Sigmoid colon (tissue), 7 donors: ENCODE measurements at regions of chr10 and their contacts with region 1.

Region 1: GRCh38 chr10:70668454-70668970 is 3.8 kb upstream of the ADAMTS14 start:
- DNase-seq: no peak
- H3K4me3 ChIP-seq: no peak overlapping the region
- H3K27ac ChIP-seq: no peak overlapping the region
- H3K4me1 ChIP-seq: peaks cover 0 to 28% (median 21%) of the 10 kb centered on the region in 4 donors
- H3K27me3 ChIP-seq: peaks cover 0 to 18% (median 0%) of the 10 kb centered on the region in 3 donors
- CTCF ChIP-seq: no peak
- EP300 ChIP-seq: no peak
- POLR2A ChIP-seq: no peak

Region 2: DNA sequence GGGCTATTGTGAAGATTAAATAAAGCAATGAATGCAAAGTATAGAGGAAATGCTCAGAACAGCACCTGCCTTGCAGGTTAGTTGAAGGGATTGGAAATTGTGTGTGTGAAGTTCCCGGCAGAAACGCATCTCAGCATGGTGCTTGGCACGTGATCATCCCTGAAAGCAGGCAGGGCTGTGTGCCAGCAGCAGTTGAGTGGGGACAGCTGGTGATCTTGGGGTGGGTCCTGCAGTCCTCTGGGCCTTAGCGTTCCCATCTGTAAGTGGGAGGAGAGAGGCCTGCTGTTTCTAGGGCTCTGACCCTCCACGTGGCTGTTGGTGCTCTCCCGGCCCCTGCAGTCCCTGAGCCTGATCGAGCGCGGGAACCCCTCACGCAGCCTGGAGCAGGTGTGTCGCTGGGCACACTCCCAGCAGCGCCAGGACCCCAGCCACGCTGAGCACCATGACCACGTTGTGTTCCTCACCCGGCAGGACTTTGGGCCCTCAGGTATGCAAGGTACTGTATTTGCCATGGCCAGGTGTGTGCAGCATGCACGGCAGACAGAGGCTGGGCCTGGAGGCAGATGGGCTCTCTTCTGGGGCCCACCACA is 61.3 kb after region 1 on chr10:
- intact Hi-C with region 1: loop called (anchors 2 kb)
- DNase-seq: no peak
- H3K4me3 ChIP-seq: no peak overlapping the region
- H3K27ac ChIP-seq: no peak overlapping the region
- H3K4me1 ChIP-seq: no peaks in the 10 kb centered on the region
- H3K27me3 ChIP-seq: no peaks in the 10 kb centered on the region
- CTCF ChIP-seq: no peak
- EP300 ChIP-seq: no peak
- POLR2A ChIP-seq: no peak